ENCODE measurements at regions of chr19 and their contacts with region 1.

Region 1: GRCh38 chr19:15332311-15332996 is at the start of gene BRD4:
- DNase-seq: no peak
- ATAC-seq: peak; percentile 24
- H3K4me3 ChIP-seq: peak within 1 kb of the TSS; percentile 99
- H3K27ac ChIP-seq: peak within 1 kb of the TSS; percentile 90
- H3K4me1 ChIP-seq: peaks cover 9% of the 10 kb centered on the region
- H3K27me3 ChIP-seq: no peaks in the 10 kb centered on the region
- CTCF ChIP-seq: no peak
- EP300 ChIP-seq: no peak
- POLR2A ChIP-seq: peak; percentile 34
- RAD21 ChIP-seq: no peak
- polyA plus RNA-seq, gene BRD4: 5.3 to 8.6 TPM

Region 2: DNA sequence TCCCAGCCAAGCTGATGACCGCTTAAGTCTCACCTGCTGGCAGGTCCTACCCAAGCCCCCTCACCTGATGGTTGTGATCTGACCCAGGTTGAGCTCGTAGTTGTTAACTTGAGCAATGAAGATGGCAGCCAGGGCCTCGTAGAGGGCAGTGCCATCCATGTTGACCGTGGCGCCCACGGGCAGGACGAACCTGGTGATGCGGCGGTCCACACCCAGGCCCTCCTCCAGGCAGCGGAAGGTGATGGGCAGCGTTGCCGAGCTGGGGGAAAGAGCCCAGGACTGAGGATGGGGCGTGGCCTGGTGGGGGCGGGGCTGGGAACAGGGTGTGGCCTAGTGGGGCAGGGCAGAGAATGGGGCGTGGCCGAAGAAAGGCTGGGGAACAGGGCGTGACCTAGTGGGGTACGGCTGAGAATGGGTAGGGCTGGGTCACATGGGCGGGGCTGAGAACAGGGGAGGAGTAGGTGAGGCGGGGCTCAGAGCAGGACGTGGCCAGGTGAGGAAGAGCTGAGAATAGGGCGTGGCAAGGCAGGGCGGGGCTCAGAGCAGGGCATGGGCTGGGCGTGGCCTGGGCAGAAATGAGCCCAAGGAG is 378.3 kb before region 1 on chr19:
- CTCF ChIA-PET with region 1: no interaction called
- POLR2A ChIA-PET with region 1: no interaction called
- RAD21 ChIA-PET with region 1: no interaction called
- SMC1A ChIA-PET with region 1: no interaction called
- in situ Hi-C with region 1: no loop called
- intact Hi-C with region 1: no loop called
- DNase-seq: no peak
- ATAC-seq: no peak
- H3K4me3 ChIP-seq: no peak overlapping the region
- H3K27ac ChIP-seq: no peak overlapping the region
- H3K4me1 ChIP-seq: no peaks in the 10 kb centered on the region
- H3K27me3 ChIP-seq: no peaks in the 10 kb centered on the region
- CTCF ChIP-seq: no peak
- EP300 ChIP-seq: no peak
- POLR2A ChIP-seq: no peak
- RAD21 ChIP-seq: no peak

Region 3: GRCh38 chr19:15280915-15281683 is 51.4 kb before region 1 on chr19:
- CTCF ChIA-PET with region 1: interaction called, 3 read pairs
- POLR2A ChIA-PET with region 1: interaction called, 5 read pairs
- RAD21 ChIA-PET with region 1: interaction called, 5 read pairs
- SMC1A ChIA-PET with region 1: interaction called, 11 read pairs
- in situ Hi-C with region 1: no loop called
- intact Hi-C with region 1: no loop called
- DNase-seq: no peak
- ATAC-seq: no peak
- H3K4me3 ChIP-seq: no peak overlapping the region
- H3K27ac ChIP-seq: no peak overlapping the region
- H3K4me1 ChIP-seq: peaks cover 35% of the 10 kb centered on the region
- H3K27me3 ChIP-seq: no peaks in the 10 kb centered on the region
- CTCF ChIP-seq: no peak
- EP300 ChIP-seq: no peak
- POLR2A ChIP-seq: no peak
- RAD21 ChIP-seq: no peak

Region 4: GRCh38 chr19:15288146-15288963 is 44.1 kb before region 1 on chr19:
- CTCF ChIA-PET with region 1: interaction called, 3 read pairs
- POLR2A ChIA-PET with region 1: interaction called, 9 read pairs
- RAD21 ChIA-PET with region 1: interaction called, 15 read pairs
- SMC1A ChIA-PET with region 1: interaction called, 11 read pairs
- in situ Hi-C with region 1: no loop called
- intact Hi-C with region 1: loop called (anchors 5 kb)
- DNase-seq: no peak
- ATAC-seq: peak; percentile 71
- H3K4me3 ChIP-seq: peak overlapping the region; percentile 44
- H3K27ac ChIP-seq: peak overlapping the region; percentile 68
- H3K4me1 ChIP-seq: peaks cover 83% of the 10 kb centered on the region
- H3K27me3 ChIP-seq: no peaks in the 10 kb centered on the region
- CTCF ChIP-seq: no peak
- EP300 ChIP-seq: no peak
- POLR2A ChIP-seq: no peak; the same call in 1 of the 2 replicates
- RAD21 ChIP-seq: no peak

Region 5: DNA sequence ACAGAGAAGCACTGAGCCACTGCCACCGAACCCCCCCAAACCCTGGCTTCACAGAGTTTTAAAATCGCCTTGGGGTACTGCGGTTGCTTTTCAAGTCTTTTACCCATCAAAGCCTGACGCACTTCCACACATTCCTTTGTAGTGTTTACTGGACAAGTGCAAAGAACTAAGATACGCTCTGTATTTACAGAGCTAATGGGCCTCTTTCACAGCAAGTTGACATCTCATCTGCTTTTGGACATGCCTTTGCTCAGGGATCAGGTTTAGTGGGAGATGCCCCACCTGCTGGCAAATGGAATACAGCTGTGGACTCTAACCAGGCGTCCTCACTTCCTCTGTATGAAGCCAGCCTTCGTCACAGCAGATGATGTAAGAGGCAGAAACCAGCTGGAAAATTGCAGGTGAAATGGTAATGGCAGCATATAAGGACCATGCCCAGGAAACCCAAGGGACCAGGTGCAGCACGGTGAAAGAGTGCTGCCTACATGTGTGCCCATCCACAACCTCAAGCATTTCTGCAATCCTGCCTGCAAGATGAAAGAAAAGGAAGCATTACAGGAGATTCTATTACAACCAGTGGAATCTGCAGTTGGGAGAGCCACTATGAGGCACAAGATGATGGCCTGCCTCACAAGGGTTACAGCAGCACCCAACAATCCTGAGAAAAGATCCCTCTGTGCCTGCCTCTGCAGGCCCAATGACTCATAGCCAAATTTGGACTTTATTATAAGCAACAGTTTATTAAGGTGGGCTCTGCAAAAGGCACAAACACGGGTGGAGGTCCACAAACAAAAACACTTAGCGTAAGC is 34.8 kb before region 1 on chr19:
- CTCF ChIA-PET with region 1: interaction called, 3 read pairs
- POLR2A ChIA-PET with region 1: interaction called, 4 read pairs
- RAD21 ChIA-PET with region 1: interaction called, 3 read pairs
- SMC1A ChIA-PET with region 1: interaction called, 8 read pairs
- in situ Hi-C with region 1: no loop called
- intact Hi-C with region 1: loop called (anchors 5 kb)
- DNase-seq: no peak
- ATAC-seq: no peak
- H3K4me3 ChIP-seq: no peak overlapping the region
- H3K27ac ChIP-seq: no peak overlapping the region
- H3K4me1 ChIP-seq: peaks cover 31% of the 10 kb centered on the region
- H3K27me3 ChIP-seq: no peaks in the 10 kb centered on the region
- CTCF ChIP-seq: no peak
- EP300 ChIP-seq: no peak
- POLR2A ChIP-seq: no peak
- RAD21 ChIP-seq: no peak

Region 6: GRCh38 chr19:15318241-15318691 is 14.2 kb before region 1 on chr19:
- CTCF ChIA-PET with region 1: interaction called, 5 read pairs
- POLR2A ChIA-PET with region 1: interaction called, 15 read pairs
- RAD21 ChIA-PET with region 1: interaction called, 22 read pairs
- SMC1A ChIA-PET with region 1: interaction called, 12 read pairs
- in situ Hi-C with region 1: no loop called
- intact Hi-C with region 1: no loop called
- DNase-seq: peak; percentile 48
- ATAC-seq: peak; percentile 81
- H3K4me3 ChIP-seq: 0 out of 2 replicates have a peak overlapping the region, but pooled peaks have one; percentile 17
- H3K27ac ChIP-seq: peak overlapping the region; percentile 73
- H3K4me1 ChIP-seq: peaks cover 42% of the 10 kb centered on the region
- H3K27me3 ChIP-seq: no peaks in the 10 kb centered on the region
- CTCF ChIP-seq: no peak
- EP300 ChIP-seq: no peak
- POLR2A ChIP-seq: no peak
- RAD21 ChIP-seq: no peak

Region 7: GRCh38 chr19:15379083-15379995 is 46.9 kb after region 1 on chr19 and contains the start of gene AKAP8:
- CTCF ChIA-PET with region 1: interaction called, 4 read pairs
- POLR2A ChIA-PET with region 1: interaction called, 45 read pairs
- RAD21 ChIA-PET with region 1: interaction called, 41 read pairs
- SMC1A ChIA-PET with region 1: interaction called, 17 read pairs
- in situ Hi-C with region 1: no loop called
- intact Hi-C with region 1: loop called (anchors 2 kb)
- DNase-seq: peak; percentile 94
- ATAC-seq: peak; percentile 92
- H3K4me3 ChIP-seq: peak within 1 kb of the TSS; percentile 94
- H3K27ac ChIP-seq: peak within 1 kb of the TSS; percentile 91
- H3K4me1 ChIP-seq: peaks cover 23% of the 10 kb centered on the region
- H3K27me3 ChIP-seq: no peaks in the 10 kb centered on the region
- CTCF ChIP-seq: no peak
- EP300 ChIP-seq: no peak
- POLR2A ChIP-seq: peak; percentile 90
- RAD21 ChIP-seq: no peak
- polyA plus RNA-seq, gene AKAP8: 5.3 to 5.5 TPM

Region 8: GRCh38 chr19:15418588-15419412 is 86.3 kb after region 1 on chr19 and contains the start of gene AKAP8L:
- CTCF ChIA-PET with region 1: interaction called, 12 read pairs
- POLR2A ChIA-PET with region 1: interaction called, 10 read pairs
- RAD21 ChIA-PET with region 1: interaction called, 3 read pairs
- SMC1A ChIA-PET with region 1: interaction called, 3 read pairs
- in situ Hi-C with region 1: no loop called
- intact Hi-C with region 1: no loop called
- DNase-seq: peak; percentile 99
- ATAC-seq: peak; percentile 99
- H3K4me3 ChIP-seq: peak within 1 kb of the TSS; percentile 98
- H3K27ac ChIP-seq: peak within 1 kb of the TSS; percentile 88
- H3K4me1 ChIP-seq: peaks cover 8% of the 10 kb centered on the region
- H3K27me3 ChIP-seq: no peaks in the 10 kb centered on the region
- CTCF ChIP-seq: peak; percentile 87 to 93 (median 89)
- EP300 ChIP-seq: 0 out of 4 replicates have a peak, but pooled peaks of 1 of the 2 experiments have one; percentile 27
- POLR2A ChIP-seq: peak; percentile 97
- RAD21 ChIP-seq: peak; percentile 77
- polyA plus RNA-seq, gene AKAP8L: 0.66 to 3.8 TPM